Adrenal gland (tissue), 19 donors: ENCODE measurements at regions of chr17 and their contacts with region 1.

Region 1: GRCh38 chr17:15007147-15007553 is 258.0 kb downstream of the PMP22 start:
- DNase-seq: no peak
- H3K4me3 ChIP-seq: no peak overlapping the region
- H3K27ac ChIP-seq: no peak overlapping the region
- H3K4me1 ChIP-seq: no peaks in the 10 kb centered on the region
- H3K27me3 ChIP-seq: no peaks in the 10 kb centered on the region
- CTCF ChIP-seq: no peak
- POLR2A ChIP-seq: no peak

Region 2: DNA sequence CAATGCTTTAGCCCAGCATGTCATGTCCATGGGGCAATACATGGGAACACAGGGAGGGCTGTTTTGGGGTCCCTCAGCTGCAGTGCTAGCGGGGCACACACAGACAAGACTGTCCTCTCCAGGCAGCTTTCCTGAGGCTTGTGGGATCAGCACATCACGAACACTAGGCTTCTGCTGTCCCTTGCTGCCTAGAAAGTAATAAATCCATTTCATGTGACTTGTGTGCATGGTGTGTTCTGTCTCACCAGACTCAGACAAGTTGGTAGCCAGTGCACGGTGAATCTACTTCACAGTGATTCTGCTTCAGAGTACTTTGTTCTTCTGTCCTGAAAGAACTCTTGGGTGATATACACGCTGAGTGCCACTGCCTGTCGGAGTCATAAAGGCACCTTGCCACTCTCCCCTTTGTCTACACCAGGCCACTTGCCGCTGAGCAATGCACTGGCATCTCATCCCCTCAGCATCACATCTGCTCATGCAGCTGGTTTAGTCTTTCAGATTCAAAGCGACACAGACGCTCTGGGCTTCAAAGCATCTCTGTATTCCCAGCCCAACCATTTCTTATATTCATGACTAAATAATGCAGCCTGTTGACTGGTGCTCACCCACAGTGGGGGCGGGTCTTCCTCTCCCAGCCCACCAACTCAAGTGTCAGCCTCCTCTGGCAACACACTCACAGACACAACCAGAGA is 1033.0 kb before region 1 on chr17:
- intact Hi-C with region 1: loop called in 1 of 2 experiments (anchors 10 kb)
- DNase-seq: no peak
- H3K4me3 ChIP-seq: no peak overlapping the region
- H3K27ac ChIP-seq: no peak overlapping the region
- H3K4me1 ChIP-seq: no peaks in the 10 kb centered on the region
- H3K27me3 ChIP-seq: no peaks in the 10 kb centered on the region
- CTCF ChIP-seq: no peak
- POLR2A ChIP-seq: no peak